ENCODE measurements at regions of chr3 and their contacts with region 1.

Region 1: DNA sequence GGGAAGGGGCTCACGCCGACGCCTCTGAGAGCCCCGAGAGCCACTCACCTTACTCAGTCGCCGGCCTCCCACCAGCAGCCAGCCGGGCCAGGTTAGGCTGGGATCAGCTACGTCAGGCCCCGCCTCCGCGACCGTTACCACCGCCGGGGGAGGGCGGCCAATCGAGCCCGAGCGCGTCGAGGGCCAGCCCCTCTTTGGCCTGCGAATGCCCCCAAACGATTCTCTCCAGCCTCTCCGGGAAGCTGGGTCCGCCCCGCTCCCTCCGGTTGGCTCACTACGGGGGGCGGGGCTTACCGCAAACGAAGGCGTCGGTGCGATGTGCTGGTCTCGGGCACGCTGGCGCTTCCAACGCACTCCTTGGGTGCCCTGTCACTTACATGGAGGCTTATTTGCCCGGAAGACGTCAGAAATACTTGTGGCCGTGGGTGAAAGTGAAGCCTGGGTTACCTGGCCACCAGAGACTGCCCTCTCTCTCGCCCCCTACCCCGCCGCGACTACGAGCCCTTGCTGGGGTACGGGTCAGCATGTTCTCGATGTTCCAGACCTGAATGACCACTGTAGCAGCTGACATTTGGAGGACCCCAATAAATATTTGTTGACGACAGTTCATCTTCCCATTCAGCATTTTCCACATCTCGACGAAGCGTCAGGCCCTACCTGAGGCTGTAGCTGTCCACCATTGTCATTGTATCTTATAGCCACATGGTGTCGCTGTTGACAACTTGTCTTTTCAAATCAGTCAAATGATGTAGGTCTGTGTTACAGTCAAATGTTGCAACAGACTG is at the start of gene CEP70:
- DNase-seq: peak; percentile 86
- H3K4me3 Mint-ChIP-seq: peak within 1 kb of the TSS; percentile 90
- H3K27ac Mint-ChIP-seq: peak within 1 kb of the TSS; percentile 99
- H3K4me1 Mint-ChIP-seq: peaks cover 9% of the 10 kb centered on the region
- H3K27me3 Mint-ChIP-seq: no peaks in the 10 kb centered on the region
- total RNA-seq, gene CEP70: 7.2 and 7.7 TPM in 2 replicates

Region 2: DNA sequence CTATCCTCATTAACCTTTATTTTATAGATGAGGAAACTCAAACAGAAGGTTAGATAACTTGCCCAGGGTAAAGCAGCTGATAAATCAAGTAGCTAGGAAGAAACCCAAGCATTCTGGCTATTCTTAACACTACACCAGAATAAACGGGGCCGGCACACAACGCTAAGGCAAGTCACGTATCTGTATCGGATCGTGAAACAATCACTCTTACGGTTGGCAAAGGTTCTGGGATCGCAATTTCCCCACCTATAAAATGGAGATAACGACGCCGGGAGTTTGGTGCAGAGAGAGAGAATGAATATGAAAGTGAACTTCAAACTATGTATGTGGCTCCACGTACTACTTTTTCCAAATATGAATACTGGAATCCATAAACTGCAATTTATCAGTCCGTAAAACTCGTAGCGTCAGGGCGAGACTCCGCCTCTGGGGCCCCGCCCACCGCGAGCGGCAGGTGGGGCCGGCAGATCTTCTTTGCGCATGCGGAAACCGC is 407.5 kb before region 1 on chr3:
- intact Hi-C with region 1: loop called (anchors 10 kb)
- DNase-seq: peak; percentile 84
- H3K4me3 Mint-ChIP-seq: peak overlapping the region; percentile 90
- H3K27ac Mint-ChIP-seq: peak overlapping the region; percentile 91
- H3K4me1 Mint-ChIP-seq: peaks cover 25% of the 10 kb centered on the region
- H3K27me3 Mint-ChIP-seq: peaks cover 20% of the 10 kb centered on the region

Region 3: DNA sequence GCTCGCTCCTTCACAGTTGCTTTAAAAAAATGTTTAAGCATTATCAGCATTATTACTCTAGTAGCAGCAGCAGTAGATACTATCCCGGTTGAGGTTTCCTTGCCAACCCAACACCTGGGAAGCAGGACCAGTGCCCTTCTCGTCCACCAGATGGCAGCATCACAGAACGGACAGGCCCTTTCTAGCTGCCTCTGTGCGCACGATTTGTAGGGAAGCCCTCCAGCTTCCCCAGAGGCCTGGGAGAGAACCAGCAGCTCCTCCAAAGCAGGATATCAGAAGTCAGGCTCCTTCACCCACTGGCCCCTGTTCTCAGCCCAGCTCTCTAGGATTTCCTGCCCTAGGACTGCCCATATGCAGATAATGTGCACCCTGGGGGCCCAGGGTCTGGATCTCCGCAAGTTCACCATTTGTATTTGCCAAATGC is 176.8 kb before region 1 on chr3:
- intact Hi-C with region 1: loop called (anchors 5 kb)
- DNase-seq: peak; percentile 36
- H3K4me3 Mint-ChIP-seq: no peak overlapping the region
- H3K27ac Mint-ChIP-seq: no peak overlapping the region
- H3K4me1 Mint-ChIP-seq: peaks cover 2% of the 10 kb centered on the region
- H3K27me3 Mint-ChIP-seq: peaks cover 21% of the 10 kb centered on the region

Region 4: DNA sequence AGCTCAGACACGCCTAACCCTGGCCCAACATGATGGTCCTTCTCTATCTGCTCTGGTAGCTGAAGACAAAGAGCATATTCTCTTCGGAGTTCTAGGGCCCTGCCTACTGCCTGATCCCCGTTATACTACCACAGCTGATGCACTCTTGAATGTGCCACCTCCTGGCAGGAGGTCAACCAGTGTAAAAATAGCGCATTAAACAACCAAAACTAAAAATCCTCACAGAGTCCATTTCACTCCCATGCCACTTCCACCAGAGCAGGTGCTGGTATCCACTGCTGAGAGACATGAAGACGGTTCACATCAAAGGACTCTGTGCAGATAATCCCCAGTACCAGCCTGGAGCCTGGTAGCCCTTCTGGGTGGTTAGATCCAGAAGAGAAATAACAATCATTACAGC is 44.8 kb before region 1 on chr3:
- intact Hi-C with region 1: no loop called
- DNase-seq: no peak
- H3K4me3 Mint-ChIP-seq: no peak overlapping the region
- H3K27ac Mint-ChIP-seq: no peak overlapping the region
- H3K4me1 Mint-ChIP-seq: peaks cover 11% of the 10 kb centered on the region
- H3K27me3 Mint-ChIP-seq: no peaks in the 10 kb centered on the region

Region 5: DNA sequence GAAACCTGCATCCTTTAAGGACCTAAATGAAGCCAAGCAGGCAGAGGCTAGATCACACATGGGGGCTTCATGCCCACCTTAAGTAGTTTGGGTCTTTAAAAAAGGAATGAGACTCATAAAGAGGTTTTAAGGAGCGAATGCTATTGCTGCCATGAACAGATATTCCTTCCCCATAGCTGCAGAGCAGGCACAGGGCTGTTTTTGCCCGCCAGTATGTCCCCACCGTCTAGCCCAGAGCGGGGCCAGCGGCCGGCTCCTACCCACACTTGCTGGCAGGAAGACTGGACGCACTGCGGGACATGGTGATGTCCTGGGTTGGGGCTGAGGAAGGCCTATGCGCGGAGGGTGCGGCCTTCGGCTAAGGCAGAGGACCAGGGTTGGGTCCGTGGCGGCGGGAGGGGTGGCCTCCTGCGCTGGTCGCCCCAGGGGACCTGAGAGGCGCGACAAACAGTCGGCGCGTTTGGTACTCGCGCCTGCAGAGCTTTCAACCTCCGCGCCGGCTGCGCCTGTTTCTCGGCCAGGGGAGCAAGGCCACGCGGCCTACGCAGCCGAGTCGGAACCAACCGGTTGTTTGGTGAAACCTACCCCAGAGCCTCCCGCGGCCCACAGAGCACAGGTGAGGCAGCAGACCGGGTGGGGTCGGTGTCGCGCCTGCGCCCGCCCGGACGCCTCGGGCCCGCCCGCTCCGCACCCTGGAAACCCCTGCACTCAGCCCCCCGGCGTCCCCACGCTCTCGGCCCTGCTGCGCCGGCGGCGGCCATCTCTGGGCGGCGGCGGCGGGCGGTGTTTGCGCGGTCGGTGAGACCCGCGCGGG is 14.2 kb after region 1 on chr3 and contains the start of gene FAIM:
- intact Hi-C with region 1: loop called (anchors 1 kb)
- DNase-seq: peak; percentile 57
- H3K4me3 Mint-ChIP-seq: peak within 1 kb of the TSS; percentile 89
- H3K27ac Mint-ChIP-seq: peak within 1 kb of the TSS; percentile 91
- H3K4me1 Mint-ChIP-seq: peaks cover 7% of the 10 kb centered on the region
- H3K27me3 Mint-ChIP-seq: no peaks in the 10 kb centered on the region
- total RNA-seq, gene FAIM: 3.1 and 3.7 TPM in 2 replicates

Region 6: GRCh38 chr3:138673641-138674530 is 79.5 kb after region 1 on chr3:
- intact Hi-C with region 1: no loop called
- DNase-seq: no peak
- H3K4me3 Mint-ChIP-seq: no peak overlapping the region
- H3K27ac Mint-ChIP-seq: no peak overlapping the region
- H3K4me1 Mint-ChIP-seq: peaks cover 2% of the 10 kb centered on the region
- H3K27me3 Mint-ChIP-seq: no peaks in the 10 kb centered on the region

Region 7: DNA sequence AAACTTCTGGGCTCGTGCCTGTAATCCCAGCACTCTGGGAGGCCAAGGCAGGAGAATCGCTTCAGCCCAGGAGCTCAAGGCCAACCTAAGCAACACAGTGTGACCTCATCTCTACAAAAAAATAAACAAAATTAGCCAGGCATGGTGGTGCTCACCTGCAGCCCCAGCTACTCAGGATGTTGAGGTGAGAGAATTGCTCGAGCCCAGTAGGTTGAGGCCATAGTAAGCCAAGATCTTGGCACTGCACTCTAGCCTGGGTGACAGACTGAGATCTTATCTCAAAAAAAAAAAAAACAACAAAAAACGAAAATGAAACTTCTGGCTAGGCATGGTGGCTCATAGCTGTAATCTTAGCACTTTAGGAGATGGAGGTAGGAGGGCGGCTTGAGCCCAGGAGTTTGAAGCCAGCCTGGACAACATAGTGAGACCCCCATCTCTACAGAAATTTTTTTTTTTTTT is 186.7 kb after region 1 on chr3:
- intact Hi-C with region 1: loop called (anchors 5 kb)
- DNase-seq: peak; percentile 65
- H3K4me3 Mint-ChIP-seq: no peak overlapping the region
- H3K27ac Mint-ChIP-seq: peak overlapping the region; percentile 42
- H3K4me1 Mint-ChIP-seq: peaks cover 17% of the 10 kb centered on the region
- H3K27me3 Mint-ChIP-seq: no peaks in the 10 kb centered on the region

Region 8: GRCh38 chr3:138915503-138916498 is 321.5 kb after region 1 on chr3:
- intact Hi-C with region 1: loop called (anchors 1 kb)
- DNase-seq: peak; percentile 71
- H3K4me3 Mint-ChIP-seq: peak overlapping the region; percentile 86
- H3K27ac Mint-ChIP-seq: no peak overlapping the region
- H3K4me1 Mint-ChIP-seq: peaks cover 5% of the 10 kb centered on the region
- H3K27me3 Mint-ChIP-seq: peaks cover 13% of the 10 kb centered on the region

Region 9: DNA sequence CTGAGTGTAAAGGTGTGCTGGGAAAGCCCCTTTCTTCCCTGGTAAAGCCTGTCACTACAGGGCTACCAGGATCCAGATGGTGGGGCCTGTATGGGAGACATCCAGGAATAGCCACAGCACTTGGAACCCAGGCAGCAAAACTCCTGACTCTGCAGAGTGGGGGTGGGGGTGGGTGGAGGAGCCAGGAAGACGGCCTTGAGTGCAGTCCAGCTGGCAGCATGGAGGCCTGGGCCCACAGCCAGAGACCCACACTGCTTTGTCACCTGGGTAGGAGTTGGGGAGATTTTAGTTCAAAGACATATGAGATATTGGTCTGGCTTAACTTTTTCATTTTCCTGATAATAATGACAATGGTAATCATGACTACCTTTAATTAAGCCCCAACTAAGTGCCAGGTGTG is 632.8 kb after region 1 on chr3:
- intact Hi-C with region 1: no loop called
- DNase-seq: no peak
- H3K4me3 Mint-ChIP-seq: no peak overlapping the region
- H3K27ac Mint-ChIP-seq: no peak overlapping the region
- H3K4me1 Mint-ChIP-seq: no peaks in the 10 kb centered on the region
- H3K27me3 Mint-ChIP-seq: peaks cover 4% of the 10 kb centered on the region

Region 10: DNA sequence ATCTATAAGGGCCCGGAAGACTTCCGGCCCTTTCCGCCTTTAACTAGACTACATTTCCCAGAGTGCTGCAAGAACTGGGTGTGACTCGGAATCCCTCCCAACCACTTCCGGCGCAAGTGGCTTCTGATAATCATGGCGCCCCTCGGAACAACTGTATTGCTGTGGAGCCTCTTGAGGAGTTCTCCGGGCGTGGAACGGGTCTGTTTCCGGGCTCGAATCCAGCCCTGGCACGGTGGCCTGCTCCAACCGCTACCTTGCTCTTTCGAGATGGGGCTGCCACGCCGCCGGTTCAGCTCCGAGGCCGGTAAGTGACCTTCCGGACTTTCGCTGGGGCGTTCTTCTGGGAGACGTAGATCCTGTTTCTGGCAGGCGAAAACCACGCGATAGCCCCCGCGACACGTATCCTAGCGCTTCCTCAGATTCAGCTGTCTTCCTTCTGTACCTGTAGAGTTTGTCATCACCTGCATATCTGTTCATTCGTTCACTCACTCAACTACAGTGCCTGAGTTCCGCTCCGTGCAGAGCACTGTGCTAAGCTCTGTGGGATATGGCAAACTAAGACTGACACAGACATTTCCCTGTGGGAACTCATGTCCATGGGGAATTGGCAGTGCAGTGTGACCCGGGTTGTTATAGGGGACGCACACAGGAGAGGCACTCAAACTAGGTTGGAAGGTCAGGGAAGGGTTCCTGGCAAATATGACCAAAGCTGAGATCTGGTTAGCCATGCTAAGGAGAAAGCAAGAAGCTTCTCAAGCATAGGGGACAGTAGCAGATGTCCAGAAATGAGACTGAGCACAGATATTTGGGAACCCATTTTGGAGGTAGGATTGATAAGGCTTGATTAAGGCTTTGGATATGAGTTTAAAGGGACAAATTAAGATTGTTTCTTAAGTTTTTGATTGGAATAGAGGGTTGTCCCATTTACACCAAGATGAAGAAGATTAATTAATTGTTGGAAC is 749.8 kb after region 1 on chr3 and contains the start of gene MRPS22:
- intact Hi-C with region 1: loop called (anchors 5 kb)
- DNase-seq: peak; percentile 78
- H3K4me3 Mint-ChIP-seq: no peak within 1 kb of the TSS
- H3K27ac Mint-ChIP-seq: peak within 1 kb of the TSS; percentile 6
- H3K4me1 Mint-ChIP-seq: peaks cover 15% of the 10 kb centered on the region
- H3K27me3 Mint-ChIP-seq: no peaks in the 10 kb centered on the region
- total RNA-seq, gene MRPS22: 51.2 and 51.9 TPM in 2 replicates

Region 11: DNA sequence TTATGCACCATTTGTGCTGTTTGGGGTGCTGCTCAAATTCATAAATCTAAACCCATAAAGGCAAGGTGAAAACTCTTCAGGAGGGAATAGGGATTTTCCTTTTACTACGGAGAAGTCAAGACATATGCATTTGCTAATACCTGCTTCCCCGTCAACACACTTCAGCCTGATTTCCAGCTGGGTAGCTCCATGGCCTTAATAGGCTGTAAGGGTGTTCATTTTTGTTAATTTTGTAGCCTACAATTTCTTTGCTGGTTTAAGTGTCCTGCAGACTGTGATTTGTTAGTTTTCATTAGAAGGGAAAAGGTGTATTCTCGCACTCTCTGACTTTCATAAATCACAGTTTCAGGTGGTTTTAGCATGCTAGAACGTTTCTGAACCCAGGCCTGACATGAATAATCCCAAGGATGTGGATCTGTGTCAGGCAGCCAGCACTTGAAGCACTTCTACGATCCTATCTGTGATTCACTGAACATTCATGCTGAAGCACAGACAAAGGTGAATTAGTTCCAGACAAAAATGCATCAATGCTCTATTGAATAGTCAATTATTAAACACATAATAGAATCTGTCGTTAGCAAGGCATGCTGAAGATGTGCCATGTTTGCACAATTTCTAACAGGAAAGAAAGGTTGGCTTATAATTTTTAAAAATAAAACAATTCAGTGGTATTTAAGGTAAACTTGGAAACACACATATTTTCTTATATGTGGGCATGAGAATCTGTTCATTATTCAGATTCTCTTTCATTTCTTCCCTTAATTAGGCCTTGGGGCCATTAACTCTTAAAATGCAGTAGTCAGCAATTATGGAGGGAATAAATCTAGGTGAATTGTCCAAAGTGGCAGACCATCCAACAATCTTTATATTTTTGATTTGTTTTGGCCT is 1101.3 kb after region 1 on chr3:
- intact Hi-C with region 1: no loop called
- DNase-seq: no peak
- H3K4me3 Mint-ChIP-seq: no peak overlapping the region
- H3K27ac Mint-ChIP-seq: no peak overlapping the region
- H3K4me1 Mint-ChIP-seq: no peaks in the 10 kb centered on the region
- H3K27me3 Mint-ChIP-seq: peaks cover 2% of the 10 kb centered on the region